Motor neuron (in vitro differentiated cells): ENCODE measurements at regions of chr1 and their contacts with region 1.

Region 1: GRCh38 chr1:247487057-247487456 is 29.2 kb upstream of the OR2B11 start:
- ATAC-seq: peak; percentile 60 to 90 (median 74)
- H3K4me3 ChIP-seq: no peak overlapping the region
- H3K27ac ChIP-seq: no peak overlapping the region
- H3K4me1 ChIP-seq: no peaks in the 10 kb centered on the region

Region 2: GRCh38 chr1:247335882-247336281 is 151.2 kb before region 1 on chr1:
- in situ Hi-C with region 1: no loop called
- ATAC-seq: no peak
- H3K4me3 ChIP-seq: no peak overlapping the region
- H3K27ac ChIP-seq: peak overlapping the region; percentile 21 to 25
- H3K4me1 ChIP-seq: peaks cover 39 to 48% of the 10 kb centered on the region in 2 donors

Region 3: GRCh38 chr1:247390116-247390791 is 96.8 kb before region 1 on chr1:
- in situ Hi-C with region 1: loop called in 2 of 9 experiments (anchors 25 kb)
- ATAC-seq: peak; percentile 74 to 99 (median 85)
- H3K4me3 ChIP-seq: no peak overlapping the region
- H3K27ac ChIP-seq: no peak overlapping the region
- H3K4me1 ChIP-seq: peaks cover 0 to 12% of the 10 kb centered on the region in 2 donors

Region 4: GRCh38 chr1:247435030-247435758 is 51.9 kb before region 1 on chr1:
- in situ Hi-C with region 1: no loop called
- ATAC-seq: no peak
- H3K4me3 ChIP-seq: no peak overlapping the region
- H3K27ac ChIP-seq: no peak overlapping the region
- H3K4me1 ChIP-seq: no peaks in the 10 kb centered on the region

Region 5: GRCh38 chr1:247557926-247558674 is 71.0 kb after region 1 on chr1:
- in situ Hi-C with region 1: no loop called
- ATAC-seq: no peak
- H3K4me3 ChIP-seq: no peak overlapping the region
- H3K27ac ChIP-seq: no peak overlapping the region
- H3K4me1 ChIP-seq: no peaks in the 10 kb centered on the region